Body of pancreas (tissue), 4 donors: ENCODE measurements at regions of chr16 and their contacts with region 1.

Region 1: GRCh38 chr16:48932216-48932855 is 322.4 kb upstream of the N4BP1 start:
- DNase-seq: no peak
- ATAC-seq: no peak
- H3K4me3 ChIP-seq: no peak overlapping the region
- H3K27ac ChIP-seq: no peak overlapping the region
- H3K4me1 ChIP-seq: no peaks in the 10 kb centered on the region
- H3K27me3 ChIP-seq: no peaks in the 10 kb centered on the region
- CTCF ChIP-seq: no peak
- POLR2A ChIP-seq: no peak

Region 2: DNA sequence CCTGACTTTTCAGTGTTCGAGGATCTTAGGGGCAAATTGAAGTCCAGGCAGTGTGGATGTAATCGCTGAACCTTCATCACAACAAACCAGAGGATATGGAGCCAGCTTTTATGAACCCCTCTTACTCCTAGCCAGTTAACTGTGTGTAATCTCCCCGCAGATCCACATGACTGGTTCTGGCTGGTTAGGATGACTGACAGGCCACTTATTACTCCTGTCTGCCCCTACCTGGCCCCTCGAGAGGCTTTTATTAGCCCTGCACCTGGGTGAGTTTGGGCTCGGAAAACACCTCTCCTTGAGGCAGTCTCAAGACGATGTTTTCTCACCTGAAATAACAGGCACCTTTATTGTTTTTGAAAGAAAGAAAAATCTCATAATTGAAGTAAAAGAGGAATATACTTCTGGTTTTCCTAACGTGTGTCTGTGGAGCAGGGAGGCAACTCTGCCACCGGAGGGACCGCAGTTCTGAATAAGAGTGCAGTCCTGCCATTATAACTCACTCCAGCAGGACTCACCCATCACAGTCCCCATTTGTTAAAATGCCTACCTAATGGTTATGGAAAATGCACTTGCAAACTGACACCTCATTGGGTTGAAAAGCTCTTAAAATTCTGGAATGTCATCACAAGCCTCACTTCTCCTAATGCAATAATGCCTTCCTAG is 30.5 kb before region 1 on chr16:
- intact Hi-C with region 1: loop called (anchors 2 kb)
- DNase-seq: no peak
- ATAC-seq: no peak
- H3K4me3 ChIP-seq: no peak overlapping the region
- H3K27ac ChIP-seq: no peak overlapping the region
- H3K4me1 ChIP-seq: no peaks in the 10 kb centered on the region
- H3K27me3 ChIP-seq: no peaks in the 10 kb centered on the region
- CTCF ChIP-seq: no peak
- POLR2A ChIP-seq: no peak